ENCODE measurements at regions of chrX and their contacts with region 1.

Region 1: GRCh38 chrX:118603981-118604380 is 108.4 kb downstream of the DOCK11 start:
- H3K4me3 ChIP-seq: no peak overlapping the region
- H3K27ac ChIP-seq: no peak overlapping the region
- H3K4me1 ChIP-seq: no peaks in the 10 kb centered on the region
- CTCF ChIP-seq: peak; percentile 80

Region 2: GRCh38 chrX:118459494-118459893 is 144.5 kb before region 1 on chrX:
- CTCF ChIA-PET with region 1: interaction called, 62 read pairs
- POLR2A ChIA-PET with region 1: interaction called, 9 read pairs
- H3K4me3 ChIP-seq: no peak overlapping the region
- H3K27ac ChIP-seq: no peak overlapping the region
- H3K4me1 ChIP-seq: no peaks in the 10 kb centered on the region
- CTCF ChIP-seq: peak; percentile 27; the same call in 1 of the 2 replicates

Region 3: DNA sequence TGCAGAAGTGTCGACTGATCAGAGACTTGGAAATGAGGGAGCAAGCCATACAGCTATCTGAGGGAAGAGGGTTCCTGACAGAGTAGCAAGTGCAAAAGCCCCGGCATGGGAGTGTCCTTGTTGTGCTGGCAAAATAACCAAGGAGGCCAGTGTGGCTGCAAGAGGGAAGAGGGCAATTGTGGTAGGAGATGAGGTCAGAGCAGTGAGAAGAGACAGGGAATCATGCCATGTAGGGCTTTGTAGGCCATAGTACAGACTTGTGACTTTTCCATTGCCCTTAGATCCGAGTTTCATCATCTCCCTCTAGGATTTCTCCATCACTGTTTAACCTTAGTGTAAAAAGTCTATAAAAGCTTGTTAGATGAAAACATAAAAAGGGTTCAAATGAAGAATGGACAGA is 32.2 kb before region 1 on chrX:
- CTCF ChIA-PET with region 1: interaction called, 10 read pairs
- POLR2A ChIA-PET with region 1: no interaction called
- H3K4me3 ChIP-seq: no peak overlapping the region
- H3K27ac ChIP-seq: no peak overlapping the region
- H3K4me1 ChIP-seq: no peaks in the 10 kb centered on the region
- CTCF ChIP-seq: no peak

Region 4: DNA sequence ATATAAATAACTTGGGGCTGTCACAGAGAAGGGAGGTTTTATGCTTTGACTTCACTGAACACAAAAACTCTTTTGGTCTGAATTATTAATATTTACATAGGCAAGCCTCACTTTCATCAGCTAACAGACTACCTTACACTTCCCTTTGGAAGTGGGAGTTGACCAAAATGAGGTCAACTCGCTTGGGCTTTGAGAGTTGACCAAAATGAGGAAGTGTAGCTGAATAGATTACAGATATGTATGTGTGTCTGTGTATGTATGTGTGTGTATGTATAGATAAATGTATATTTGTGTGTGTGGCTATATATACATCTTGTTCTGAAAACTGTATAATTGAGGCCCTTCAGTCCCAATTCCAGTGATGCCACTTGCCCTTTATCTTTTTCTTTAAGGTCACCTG is 10.2 kb after region 1 on chrX:
- CTCF ChIA-PET with region 1: interaction called, 31 read pairs
- POLR2A ChIA-PET with region 1: no interaction called
- H3K4me3 ChIP-seq: no peak overlapping the region
- H3K27ac ChIP-seq: no peak overlapping the region
- H3K4me1 ChIP-seq: no peaks in the 10 kb centered on the region
- CTCF ChIP-seq: no peak

Region 5: GRCh38 chrX:118694638-118695037 is 90.7 kb after region 1 on chrX:
- CTCF ChIA-PET with region 1: no interaction called
- POLR2A ChIA-PET with region 1: no interaction called
- H3K4me3 ChIP-seq: no peak overlapping the region
- H3K27ac ChIP-seq: no peak overlapping the region
- H3K4me1 ChIP-seq: no peaks in the 10 kb centered on the region
- CTCF ChIP-seq: no peak

Region 6: GRCh38 chrX:118807151-118808017 is 203.4 kb after region 1 on chrX:
- CTCF ChIA-PET with region 1: interaction called, 13 read pairs
- POLR2A ChIA-PET with region 1: no interaction called
- H3K4me3 ChIP-seq: no peak overlapping the region
- H3K27ac ChIP-seq: no peak overlapping the region
- H3K4me1 ChIP-seq: no peaks in the 10 kb centered on the region
- CTCF ChIP-seq: peak; percentile 79